ENCODE measurements at regions of chr15 and their contacts with region 1.

Region 1: GRCh38 chr15:41331833-41332787 is at the start of gene OIP5:
- DNase-seq: peak; percentile 99
- ATAC-seq: peak; percentile 97 to 98
- H3K4me3 ChIP-seq: peak within 1 kb of the TSS; percentile 88 to 99 (median 94)
- H3K27ac ChIP-seq: peak within 1 kb of the TSS; percentile 82 to 91 (median 88)
- H3K4me1 ChIP-seq: peaks cover 15 to 18% of the 10 kb centered on the region in 2 donors
- H3K27me3 ChIP-seq: no peaks in the 10 kb centered on the region
- CTCF ChIP-seq: peak; percentile 77 to 87 (median 83)
- POLR2A ChIP-seq: no peak
- total RNA-seq, gene OIP5: 1.9 to 7.8 (median 4.0) TPM

Region 2: DNA sequence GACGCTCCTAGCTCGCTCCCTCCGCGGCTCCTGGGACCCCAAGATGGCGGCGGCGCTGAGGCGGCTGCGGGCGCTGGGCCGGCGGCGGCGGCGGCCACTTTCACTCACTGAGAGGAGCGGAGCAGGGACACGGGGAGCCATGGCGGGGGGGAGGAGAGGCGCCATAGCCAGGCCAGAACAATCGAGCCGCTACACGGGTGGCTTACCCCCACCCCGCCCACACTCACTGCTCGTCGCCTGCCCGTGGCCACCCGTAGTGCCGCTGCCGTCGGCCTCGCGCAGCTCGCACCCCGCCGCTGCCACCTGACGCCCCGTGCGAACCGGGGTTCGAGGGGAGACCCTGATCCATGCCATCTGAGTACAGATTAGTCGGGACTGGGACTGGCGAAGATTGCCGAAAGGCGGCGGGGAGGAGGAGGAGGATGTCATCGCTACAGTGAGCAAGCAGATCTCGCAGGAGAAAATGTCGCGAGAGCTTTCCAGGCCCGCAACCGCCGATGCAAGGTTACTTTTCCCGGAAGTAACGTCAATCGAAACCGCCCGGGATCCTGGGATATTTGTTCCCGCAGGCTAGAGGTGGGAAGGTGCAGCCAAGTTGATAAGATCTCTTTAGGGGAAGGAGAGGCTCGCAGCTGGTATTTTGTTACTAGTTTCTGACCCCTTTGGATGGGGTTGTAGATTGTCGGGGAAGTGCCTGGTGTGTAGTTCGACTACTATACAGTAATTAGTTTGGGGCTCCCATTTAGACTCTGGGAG is 215.8 kb before region 1 on chr15 and contains the start of gene INO80:
- in situ Hi-C with region 1: loop called in 1 of 4 experiments (anchors 25 kb)
- intact Hi-C with region 1: loop called (anchors 1 kb)
- DNase-seq: peak; percentile 98
- ATAC-seq: peak; percentile 93 to 94
- H3K4me3 ChIP-seq: peak within 1 kb of the TSS; percentile 81 to 97 (median 90)
- H3K27ac ChIP-seq: peak within 1 kb of the TSS; percentile 97 to 100 (median 100)
- H3K4me1 ChIP-seq: peaks cover 10 to 24% of the 10 kb centered on the region in 2 donors
- H3K27me3 ChIP-seq: no peaks in the 10 kb centered on the region
- CTCF ChIP-seq: peak in 1 of 5 experiments; percentile 32
- POLR2A ChIP-seq: peak; percentile 74 to 77
- total RNA-seq, gene INO80: 25.5 to 33.0 (median 27.8) TPM

Region 3: GRCh38 chr15:41283653-41284426 is 48.3 kb before region 1 on chr15:
- in situ Hi-C with region 1: no loop called
- intact Hi-C with region 1: loop called (anchors 1 kb)
- DNase-seq: peak; percentile 98
- ATAC-seq: peak; percentile 96 to 98
- H3K4me3 ChIP-seq: peak overlapping the region; percentile 93 to 98 (median 96)
- H3K27ac ChIP-seq: peak overlapping the region; percentile 94 to 99 (median 96)
- H3K4me1 ChIP-seq: peaks cover 19 to 30% of the 10 kb centered on the region in 2 donors
- H3K27me3 ChIP-seq: no peaks in the 10 kb centered on the region
- CTCF ChIP-seq: peak in 1 of 5 experiments; percentile 10
- POLR2A ChIP-seq: peak; percentile 87 to 93

Region 4: GRCh38 chr15:41291065-41291631 is 41.0 kb before region 1 on chr15:
- in situ Hi-C with region 1: loop called in 1 of 4 experiments (anchors 5 kb)
- intact Hi-C with region 1: no loop called
- DNase-seq: no peak
- ATAC-seq: no peak
- H3K4me3 ChIP-seq: no peak overlapping the region
- H3K27ac ChIP-seq: peak overlapping the region in 2 of 4 donors; percentile 4 to 60
- H3K4me1 ChIP-seq: peaks cover 11 to 24% of the 10 kb centered on the region in 2 donors
- H3K27me3 ChIP-seq: no peaks in the 10 kb centered on the region
- CTCF ChIP-seq: no peak
- POLR2A ChIP-seq: no peak

Region 5: DNA sequence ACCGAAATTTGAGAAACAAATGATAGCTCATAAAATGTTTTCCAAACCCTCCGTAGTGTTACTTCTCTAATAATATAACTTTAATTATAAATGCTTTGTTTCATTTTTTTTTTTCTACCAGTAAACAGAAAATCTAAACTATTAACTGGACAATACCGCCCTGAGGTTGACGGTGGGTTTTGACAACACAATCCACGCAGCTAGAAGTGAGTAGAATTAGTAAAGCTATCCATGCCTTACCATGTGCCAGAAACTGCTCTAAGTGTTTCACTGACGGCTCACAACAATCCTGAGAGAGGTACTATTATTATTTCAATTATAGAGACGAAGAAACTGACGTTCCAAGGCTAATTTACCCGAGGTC is 69.8 kb after region 1 on chr15:
- in situ Hi-C with region 1: no loop called
- intact Hi-C with region 1: loop called (anchors 5 kb)
- DNase-seq: no peak
- ATAC-seq: peak; percentile 28 to 32
- H3K4me3 ChIP-seq: peak overlapping the region; percentile 81 to 98 (median 89)
- H3K27ac ChIP-seq: peak overlapping the region; percentile 83 to 95 (median 92)
- H3K4me1 ChIP-seq: peaks cover 9 to 20% of the 10 kb centered on the region in 2 donors
- H3K27me3 ChIP-seq: no peaks in the 10 kb centered on the region
- CTCF ChIP-seq: no peak
- POLR2A ChIP-seq: no peak

Measured in gastrocnemius medialis (tissue), 4 donors.